AG04449 (cell line): ENCODE measurements at regions of chr4 and their contacts with region 1.

Region 1: DNA sequence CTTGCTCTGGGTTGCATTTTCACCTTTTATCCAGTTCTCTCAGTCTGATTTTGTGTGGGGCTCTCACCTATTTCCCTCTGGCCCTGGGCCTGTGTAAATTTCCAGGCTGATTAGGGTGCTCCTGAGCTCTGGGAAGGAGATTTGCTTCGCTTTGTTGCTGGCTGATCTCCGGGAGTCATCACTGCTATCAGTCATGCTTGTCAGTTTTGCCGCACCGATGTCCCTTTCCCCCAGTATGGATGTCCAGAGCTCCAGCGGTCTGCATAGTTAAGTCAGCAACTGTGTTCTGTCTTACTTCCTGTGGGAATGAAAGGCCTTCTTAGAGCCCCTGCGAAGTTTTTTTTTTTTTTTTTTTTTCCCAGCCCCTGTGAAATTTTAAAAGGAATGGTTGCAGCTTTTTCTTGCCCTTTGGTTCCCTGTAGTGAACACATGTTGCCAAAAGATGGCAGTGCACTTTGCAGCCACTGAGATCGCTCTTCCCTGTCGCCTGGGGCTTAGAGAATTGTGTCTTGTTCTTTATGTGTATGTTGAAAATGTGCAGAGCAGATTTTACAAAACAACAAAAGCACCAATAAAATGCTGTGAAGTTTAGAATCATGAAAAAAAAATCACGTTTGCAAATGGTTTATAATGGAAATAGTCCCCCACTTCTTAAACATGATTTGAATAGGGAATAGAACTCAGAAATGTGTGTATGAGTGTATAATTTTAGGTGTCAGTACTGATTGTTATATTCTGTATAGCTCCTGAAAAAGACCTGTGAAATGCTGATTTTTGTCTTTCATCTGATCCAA is 109.1 kb upstream of the SLC4A4 start:
- DNase-seq: no peak
- H3K4me3 ChIP-seq: no peak overlapping the region; the same call in 1 of the 2 replicates
- CTCF ChIP-seq: peak; percentile 76

Region 2: GRCh38 chr4:71195924-71196323 is 33.8 kb before region 1 on chr4:
- CTCF ChIA-PET with region 1: interaction called, 30 read pairs
- POLR2A ChIA-PET with region 1: no interaction called
- DNase-seq: peak; percentile 62
- H3K4me3 ChIP-seq: no peak overlapping the region
- CTCF ChIP-seq: no peak

Region 3: GRCh38 chr4:71209161-71209560 is 20.5 kb before region 1 on chr4:
- CTCF ChIA-PET with region 1: interaction called, 29 read pairs
- POLR2A ChIA-PET with region 1: interaction called, 3 read pairs
- DNase-seq: no peak
- H3K4me3 ChIP-seq: no peak overlapping the region
- CTCF ChIP-seq: no peak

Region 4: GRCh38 chr4:71251261-71251660 is 21.6 kb after region 1 on chr4:
- CTCF ChIA-PET with region 1: interaction called, 16 read pairs
- POLR2A ChIA-PET with region 1: no interaction called
- DNase-seq: peak; percentile 73
- H3K4me3 ChIP-seq: no peak overlapping the region
- CTCF ChIP-seq: no peak

Region 5: GRCh38 chr4:71553605-71554004 is 323.9 kb after region 1 on chr4:
- CTCF ChIA-PET with region 1: interaction called, 27 read pairs
- POLR2A ChIA-PET with region 1: no interaction called
- DNase-seq: no peak
- H3K4me3 ChIP-seq: no peak overlapping the region
- CTCF ChIP-seq: peak; percentile 63